Psoas muscle (tissue), 8 donors: ENCODE measurements at regions of chr5 and their contacts with region 1.

Region 1: DNA sequence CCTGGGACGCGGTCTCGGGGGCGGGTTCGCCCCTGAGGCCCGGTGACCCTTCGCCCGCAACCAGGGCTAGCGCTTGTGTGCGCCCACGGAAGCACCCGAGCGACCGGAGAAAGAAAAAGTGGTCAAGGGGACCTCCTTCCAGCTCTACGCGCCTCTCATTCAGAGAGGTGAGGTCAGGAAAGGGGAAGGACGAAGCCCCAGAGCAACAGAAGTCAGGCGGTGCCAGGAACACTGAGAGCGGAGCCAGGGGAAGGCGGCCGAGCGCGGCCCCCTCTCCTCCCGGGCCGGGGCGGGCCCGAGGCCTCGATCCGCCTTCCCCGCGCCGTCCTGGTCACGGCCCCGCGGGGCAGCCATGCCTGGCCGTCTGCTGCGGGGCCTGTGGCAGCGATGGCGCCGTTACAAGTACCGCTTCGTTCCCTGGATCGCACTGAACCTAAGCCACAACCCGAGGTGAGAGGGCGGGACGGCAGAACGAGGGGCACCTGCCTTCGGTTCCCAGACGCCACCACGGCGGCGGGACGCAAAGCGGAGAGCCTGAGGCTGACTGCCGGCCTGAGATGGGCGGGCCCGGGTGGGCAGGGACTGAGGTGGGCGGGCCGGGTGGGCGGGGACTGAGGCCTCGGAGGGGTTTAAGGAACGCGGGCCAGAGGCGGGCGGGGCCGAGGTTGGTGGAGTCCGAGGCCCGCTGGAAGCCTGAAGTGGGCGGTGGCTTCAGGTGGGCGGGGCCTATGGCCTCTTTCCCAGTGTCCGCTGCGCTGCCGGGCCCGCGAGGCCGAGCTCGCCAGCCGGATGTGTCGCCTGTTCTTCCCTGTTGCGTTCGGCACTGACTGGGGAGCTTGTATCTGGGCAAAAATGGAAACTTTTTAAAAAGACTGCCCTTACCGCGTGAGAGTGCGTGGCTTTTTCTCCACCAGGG is at the start of gene SETD9:
- DNase-seq: peak; percentile 99
- ATAC-seq: peak; percentile 92 to 96 (median 95)
- H3K4me3 ChIP-seq: peak within 1 kb of the TSS; percentile 82
- H3K27ac ChIP-seq: peak within 1 kb of the TSS; percentile 96
- H3K4me1 ChIP-seq: peaks cover 9% of the 10 kb centered on the region
- H3K27me3 ChIP-seq: no peaks in the 10 kb centered on the region
- CTCF ChIP-seq: no peak
- total RNA-seq, gene SETD9: 4.9 to 16.3 (median 11.0) TPM

Region 2: GRCh38 chr5:56838409-56839039 is 71.0 kb before region 1 on chr5:
- intact Hi-C with region 1: no loop called
- DNase-seq: no peak
- ATAC-seq: peak; percentile 57 to 87 (median 64)
- H3K4me3 ChIP-seq: peak overlapping the region; percentile 44
- H3K27ac ChIP-seq: peak overlapping the region; percentile 20
- H3K4me1 ChIP-seq: peaks cover 43% of the 10 kb centered on the region
- H3K27me3 ChIP-seq: no peaks in the 10 kb centered on the region
- CTCF ChIP-seq: peak; percentile 62

Region 3: GRCh38 chr5:56856541-56857178 is 52.9 kb before region 1 on chr5:
- intact Hi-C with region 1: no loop called
- DNase-seq: no peak
- ATAC-seq: no peak
- H3K4me3 ChIP-seq: no peak overlapping the region
- H3K27ac ChIP-seq: no peak overlapping the region
- H3K4me1 ChIP-seq: peaks cover 16% of the 10 kb centered on the region
- H3K27me3 ChIP-seq: no peaks in the 10 kb centered on the region
- CTCF ChIP-seq: no peak

Region 4: DNA sequence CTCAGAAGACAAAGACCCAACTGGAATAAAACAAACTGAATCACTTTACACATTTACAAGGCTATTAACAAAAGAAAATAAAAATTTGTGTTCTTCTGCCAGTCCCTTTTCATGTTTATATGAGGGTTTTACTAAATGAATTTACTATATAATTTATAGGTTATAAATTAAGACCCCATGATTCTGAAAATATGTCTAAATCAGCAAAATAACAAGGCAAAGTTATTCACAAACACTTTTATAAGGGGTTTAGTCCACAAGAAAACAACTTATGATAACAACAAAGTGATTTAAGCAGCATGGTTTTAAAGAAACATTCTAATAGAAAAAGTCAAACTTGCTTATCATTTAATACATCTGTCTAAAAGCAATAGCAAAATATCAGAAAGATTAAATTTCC is 37.5 kb after region 1 on chr5:
- intact Hi-C with region 1: loop called (anchors 2 to 5 kb)
- DNase-seq: no peak
- ATAC-seq: no peak
- H3K4me3 ChIP-seq: no peak overlapping the region
- H3K27ac ChIP-seq: no peak overlapping the region
- H3K4me1 ChIP-seq: peaks cover 5% of the 10 kb centered on the region
- H3K27me3 ChIP-seq: no peaks in the 10 kb centered on the region
- CTCF ChIP-seq: no peak

Region 5: DNA sequence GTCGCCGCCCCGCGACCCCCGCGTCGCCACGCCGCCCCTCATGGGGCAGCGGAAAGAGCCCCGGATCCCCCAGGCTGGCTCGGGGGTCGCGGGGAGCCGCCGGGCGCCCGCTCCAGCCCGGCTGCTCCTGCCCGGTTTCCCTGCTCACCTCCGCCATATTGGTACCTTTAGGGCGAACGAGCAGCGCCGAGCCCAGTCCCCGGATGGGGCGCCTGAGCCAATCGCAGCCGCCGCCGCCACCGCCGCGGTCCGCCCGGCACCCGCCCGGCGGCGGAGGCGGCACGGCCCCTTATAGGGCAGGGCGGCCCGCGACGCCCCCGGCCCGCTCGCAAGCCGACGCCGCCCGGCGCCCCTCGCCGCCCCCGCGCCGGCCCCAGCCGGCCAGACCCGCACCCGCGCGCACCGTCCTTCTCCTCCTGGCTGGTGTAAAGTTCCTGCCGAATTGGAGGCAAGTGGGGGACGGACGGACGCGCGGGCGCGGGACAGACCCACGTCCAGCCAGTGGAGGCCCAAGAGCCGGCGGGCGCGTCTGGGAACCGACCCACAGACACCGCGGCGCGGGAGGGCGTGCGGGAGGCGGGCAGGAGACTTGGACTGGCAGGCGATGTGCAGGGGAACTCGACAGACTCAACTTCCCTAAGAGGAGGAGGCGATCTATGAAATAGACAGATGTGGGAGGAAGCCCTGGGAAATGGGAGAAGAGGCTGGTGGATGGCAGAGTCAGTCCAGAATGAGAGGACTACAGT is 42.6 kb after region 1 on chr5 and contains the start of gene MIER3:
- intact Hi-C with region 1: loop called (anchors 2 to 5 kb)
- DNase-seq: peak; percentile 82 to 87
- ATAC-seq: peak; percentile 95 to 98 (median 97)
- H3K4me3 ChIP-seq: peak within 1 kb of the TSS; percentile 91
- H3K27ac ChIP-seq: peak within 1 kb of the TSS; percentile 76
- H3K4me1 ChIP-seq: peaks cover 5% of the 10 kb centered on the region
- H3K27me3 ChIP-seq: no peaks in the 10 kb centered on the region
- CTCF ChIP-seq: no peak
- total RNA-seq, gene MIER3: 11.9 to 20.5 (median 14.7) TPM